GM12878 (cell line): ENCODE measurements at regions of chr22 and their contacts with region 1.

Region 1: GRCh38 chr22:20509344-20510047 is 2.1 kb downstream of the MED15 start:
- DNase-seq: no peak
- ATAC-seq: peak; percentile 54
- H3K4me3 ChIP-seq: peak overlapping the region; percentile 95
- H3K27ac ChIP-seq: peak overlapping the region; percentile 90
- H3K4me1 ChIP-seq: peaks cover 22% of the 10 kb centered on the region
- H3K27me3 ChIP-seq: no peaks in the 10 kb centered on the region
- CTCF ChIP-seq: no peak
- EP300 ChIP-seq: 0 out of 4 replicates have a peak, but pooled peaks of 1 of the 2 experiments have one; percentile 31
- POLR2A ChIP-seq: no peak
- RAD21 ChIP-seq: no peak

Region 2: GRCh38 chr22:20523086-20523983 is 13.8 kb after region 1 on chr22:
- CTCF ChIA-PET with region 1: interaction called, 3 read pairs
- POLR2A ChIA-PET with region 1: interaction called, 4 read pairs
- RAD21 ChIA-PET with region 1: interaction called, 4 read pairs
- SMC1A ChIA-PET with region 1: interaction called, 14 read pairs
- in situ Hi-C with region 1: no loop called
- intact Hi-C with region 1: no loop called
- DNase-seq: no peak
- ATAC-seq: peak; percentile 58
- H3K4me3 ChIP-seq: no peak overlapping the region; the same call in 1 of the 2 replicates
- H3K27ac ChIP-seq: peak overlapping the region; percentile 77
- H3K4me1 ChIP-seq: peaks cover 24% of the 10 kb centered on the region
- H3K27me3 ChIP-seq: no peaks in the 10 kb centered on the region
- CTCF ChIP-seq: no peak
- EP300 ChIP-seq: no peak
- POLR2A ChIP-seq: no peak
- RAD21 ChIP-seq: no peak

Region 3: DNA sequence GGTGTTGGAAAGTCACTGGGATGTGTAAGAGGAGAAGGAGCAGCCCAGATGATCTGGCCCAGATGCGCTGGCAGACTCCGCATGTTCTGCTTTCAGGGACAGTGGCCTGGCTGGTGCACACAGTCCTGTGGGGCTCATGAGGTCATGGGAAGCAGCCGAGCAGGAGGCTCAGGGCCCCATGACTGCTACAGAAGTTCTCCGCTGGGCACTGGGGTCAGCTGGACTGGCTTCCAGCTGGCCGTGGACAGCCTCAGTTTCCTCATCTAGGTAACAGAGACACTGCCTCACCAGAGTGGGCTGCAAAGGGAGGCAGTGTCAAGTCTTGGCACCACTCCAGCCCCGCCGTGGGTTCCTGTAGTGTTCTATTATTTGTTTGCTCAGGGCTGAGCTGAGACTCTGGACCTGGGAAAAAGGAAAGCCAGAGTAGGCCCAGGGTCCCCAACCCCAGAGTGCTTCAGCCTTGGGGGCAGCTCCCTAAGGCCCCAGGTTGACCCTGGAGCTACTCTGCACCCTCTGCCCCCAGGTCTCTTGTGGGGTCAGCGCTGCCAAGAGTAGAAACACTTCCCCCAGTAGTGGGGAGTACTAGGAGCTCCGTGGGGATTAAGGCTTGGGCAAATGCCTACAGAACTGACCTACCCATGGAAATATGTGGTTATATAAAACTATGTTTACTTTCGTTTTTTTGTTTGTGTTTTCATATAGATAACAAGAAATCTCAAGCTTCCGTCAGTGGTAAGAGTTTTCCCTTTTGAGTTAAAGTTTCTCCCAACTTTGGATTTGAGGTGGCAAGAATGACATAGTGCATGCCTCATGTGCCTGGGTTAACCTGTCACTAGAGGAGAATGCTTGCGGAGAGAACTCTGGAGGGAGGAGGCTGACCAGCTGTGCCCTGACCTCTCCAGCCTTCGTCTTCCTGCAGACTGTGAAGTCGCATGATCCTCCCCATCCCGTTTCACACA is 43.2 kb after region 1 on chr22:
- CTCF ChIA-PET with region 1: no interaction called
- POLR2A ChIA-PET with region 1: no interaction called
- RAD21 ChIA-PET with region 1: no interaction called
- SMC1A ChIA-PET with region 1: no interaction called
- in situ Hi-C with region 1: no loop called
- intact Hi-C with region 1: no loop called
- DNase-seq: no peak
- ATAC-seq: no peak
- H3K4me3 ChIP-seq: no peak overlapping the region
- H3K27ac ChIP-seq: no peak overlapping the region
- H3K4me1 ChIP-seq: peaks cover 24% of the 10 kb centered on the region
- H3K27me3 ChIP-seq: no peaks in the 10 kb centered on the region
- CTCF ChIP-seq: no peak
- EP300 ChIP-seq: no peak
- POLR2A ChIP-seq: no peak
- RAD21 ChIP-seq: no peak

Region 4: GRCh38 chr22:20606041-20606783 is 96.7 kb after region 1 on chr22:
- CTCF ChIA-PET with region 1: no interaction called
- POLR2A ChIA-PET with region 1: no interaction called
- RAD21 ChIA-PET with region 1: no interaction called
- SMC1A ChIA-PET with region 1: no interaction called
- in situ Hi-C with region 1: no loop called
- intact Hi-C with region 1: no loop called
- DNase-seq: no peak
- ATAC-seq: peak; percentile 92
- H3K4me3 ChIP-seq: no peak overlapping the region
- H3K27ac ChIP-seq: no peak overlapping the region
- H3K4me1 ChIP-seq: peaks cover 18% of the 10 kb centered on the region
- H3K27me3 ChIP-seq: no peaks in the 10 kb centered on the region
- CTCF ChIP-seq: peak; percentile 90 to 97 (median 90)
- EP300 ChIP-seq: no peak
- POLR2A ChIP-seq: no peak
- RAD21 ChIP-seq: peak; percentile 93